Caco-2 (cell line): ENCODE measurements at regions of chr5 and their contacts with region 1.

Region 1: DNA sequence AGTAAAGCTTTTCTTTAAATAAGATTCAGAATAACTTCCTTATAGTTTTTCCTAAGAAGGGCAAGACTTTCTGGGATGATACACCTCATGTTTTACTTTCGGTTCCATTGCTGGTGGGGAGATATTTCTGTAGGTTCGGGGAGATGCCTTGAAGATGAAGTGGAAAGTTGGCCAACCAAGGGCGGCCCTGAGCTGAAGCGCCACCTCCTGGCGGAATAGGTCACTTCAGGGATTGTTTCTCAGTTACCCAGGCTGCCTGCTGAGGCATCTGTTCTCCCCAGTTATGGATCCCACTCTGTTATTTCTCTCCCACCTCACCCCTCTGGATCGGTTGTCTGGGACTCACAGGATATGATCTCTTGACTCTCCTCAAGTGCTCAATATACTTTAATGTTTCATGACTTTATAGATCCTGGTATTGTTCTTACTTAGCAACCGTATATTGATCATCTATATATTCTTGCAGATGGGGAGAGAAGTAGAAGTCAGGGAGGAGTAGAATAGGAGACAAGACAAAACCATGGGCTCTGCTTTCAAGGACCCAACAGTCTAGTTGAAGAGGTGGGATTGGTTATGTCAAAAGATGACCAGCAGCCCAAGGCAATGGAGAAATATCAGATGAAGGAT is 23.4 kb downstream of the MEGF10 start:
- DNase-seq: peak; percentile 50 to 73
- H3K4me3 ChIP-seq: no peak overlapping the region
- H3K4me3 Mint-ChIP-seq: no peak overlapping the region
- H3K27ac Mint-ChIP-seq: no peak overlapping the region
- H3K4me1 ChIP-seq: no peaks in the 10 kb centered on the region
- H3K4me1 Mint-ChIP-seq: no peaks in the 10 kb centered on the region
- H3K27me3 ChIP-seq: no peaks in the 10 kb centered on the region
- H3K27me3 Mint-ChIP-seq: peaks cover 4% of the 10 kb centered on the region
- CTCF ChIP-seq: peak; percentile 75 to 80

Region 2: DNA sequence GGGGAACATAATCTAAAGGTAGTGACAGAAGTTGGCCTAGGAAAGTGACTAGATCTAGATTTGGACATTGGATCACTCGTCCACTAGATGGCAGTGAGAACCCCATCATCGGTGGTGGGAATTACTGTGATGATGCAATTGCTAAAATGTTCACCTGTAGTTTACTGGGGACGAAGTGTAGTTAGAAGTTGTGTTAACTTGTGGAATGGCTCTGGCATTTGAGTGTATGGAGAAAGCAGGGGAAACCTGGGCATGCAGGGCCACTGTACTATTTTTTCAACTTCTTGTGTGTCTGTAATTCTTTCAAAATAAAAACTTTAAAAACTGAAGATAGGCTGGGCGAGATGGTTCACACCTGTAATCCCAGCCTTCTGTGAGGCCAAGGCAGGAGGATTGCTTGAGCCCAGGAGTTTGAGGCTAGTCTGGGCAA is 637.8 kb before region 1 on chr5:
- CTCF ChIA-PET with region 1: no interaction called
- POLR2A ChIA-PET with region 1: no interaction called
- intact Hi-C with region 1: loop called (anchors 5 kb)
- DNase-seq: peak; percentile 60 to 71
- H3K4me3 ChIP-seq: no peak overlapping the region
- H3K4me3 Mint-ChIP-seq: peak overlapping the region; percentile 18
- H3K27ac Mint-ChIP-seq: peak overlapping the region; percentile 40
- H3K4me1 ChIP-seq: no peaks in the 10 kb centered on the region
- H3K4me1 Mint-ChIP-seq: peaks cover 7% of the 10 kb centered on the region
- H3K27me3 ChIP-seq: no peaks in the 10 kb centered on the region
- H3K27me3 Mint-ChIP-seq: no peaks in the 10 kb centered on the region
- CTCF ChIP-seq: peak; percentile 78 to 85

Region 3: DNA sequence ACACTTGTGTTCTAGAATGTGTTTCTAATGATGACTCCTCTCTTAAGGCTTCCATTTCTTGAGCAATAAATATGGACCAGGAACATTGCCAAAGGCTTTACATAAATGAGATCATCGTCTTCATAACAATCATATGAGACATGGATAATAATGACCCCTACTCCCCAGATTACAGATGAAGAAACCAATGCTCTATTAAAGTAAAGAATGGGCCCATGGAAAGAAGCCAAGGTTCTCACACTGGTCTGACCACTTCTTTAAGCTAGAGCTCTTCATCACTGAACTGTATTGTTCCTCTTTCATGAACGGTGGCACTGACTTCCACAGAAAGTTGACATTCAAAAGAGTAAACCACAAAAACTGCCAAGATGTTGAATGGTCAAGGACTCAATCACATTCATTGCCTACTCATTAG is 348.9 kb before region 1 on chr5:
- CTCF ChIA-PET with region 1: no interaction called
- POLR2A ChIA-PET with region 1: no interaction called
- intact Hi-C with region 1: loop called (anchors 10 kb)
- DNase-seq: no peak
- H3K4me3 ChIP-seq: no peak overlapping the region
- H3K4me3 Mint-ChIP-seq: no peak overlapping the region
- H3K27ac Mint-ChIP-seq: no peak overlapping the region
- H3K4me1 ChIP-seq: no peaks in the 10 kb centered on the region
- H3K4me1 Mint-ChIP-seq: no peaks in the 10 kb centered on the region
- H3K27me3 ChIP-seq: no peaks in the 10 kb centered on the region
- H3K27me3 Mint-ChIP-seq: peaks cover 4% of the 10 kb centered on the region
- CTCF ChIP-seq: no peak

Region 4: DNA sequence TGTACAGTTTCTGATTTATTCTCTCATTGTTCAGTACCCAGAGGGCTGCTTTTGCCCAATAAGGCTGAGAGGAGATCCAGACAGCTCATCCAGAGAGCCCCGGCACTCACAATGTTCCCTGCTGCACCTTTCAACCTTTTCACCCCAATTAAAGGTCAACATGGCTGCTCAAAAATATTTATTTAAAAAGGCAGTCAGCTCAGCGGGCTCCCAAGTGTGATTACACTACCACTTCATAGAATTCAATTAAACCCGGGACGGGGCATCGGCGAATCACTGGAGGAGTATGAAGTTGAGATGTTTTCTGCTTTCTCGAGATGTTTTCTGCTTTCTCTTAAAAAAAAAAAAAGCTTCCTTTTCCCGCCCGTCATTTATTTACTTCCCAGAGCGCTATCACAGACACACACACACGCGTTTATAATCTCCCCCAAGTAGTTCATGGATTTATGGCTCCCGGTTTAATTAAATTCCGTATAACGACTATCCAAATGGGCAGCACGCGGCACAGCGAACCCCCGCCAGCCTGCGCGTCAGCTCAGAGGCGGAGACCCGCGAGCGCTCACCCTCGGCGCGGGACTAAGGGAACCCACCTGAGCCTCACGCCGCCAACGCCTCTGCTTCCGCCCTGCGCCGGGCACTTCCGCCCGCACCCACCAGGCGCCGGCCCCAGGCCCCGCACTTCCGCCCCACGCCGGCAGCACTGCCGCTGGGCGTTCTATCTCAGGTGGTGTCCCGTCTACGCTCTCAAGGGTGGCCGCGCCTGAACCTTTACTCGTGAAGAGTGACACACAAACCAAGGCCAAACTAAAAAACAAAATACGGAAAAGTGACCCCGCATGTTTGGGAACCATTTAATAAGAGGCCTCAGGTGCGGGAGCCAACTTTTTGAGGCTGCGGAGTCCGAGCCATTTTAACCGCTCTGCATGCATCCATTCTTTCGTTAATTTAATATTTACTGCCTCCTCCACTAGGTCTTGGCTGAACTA is 240.8 kb before region 1 on chr5 and contains the start of gene C5orf63:
- CTCF ChIA-PET with region 1: no interaction called
- POLR2A ChIA-PET with region 1: no interaction called
- intact Hi-C with region 1: loop called (anchors 10 kb)
- DNase-seq: peak; percentile 78 to 79
- H3K4me3 ChIP-seq: peak within 1 kb of the TSS; percentile 50
- H3K4me3 Mint-ChIP-seq: peak within 1 kb of the TSS; percentile 77
- H3K27ac Mint-ChIP-seq: peak within 1 kb of the TSS; percentile 73
- H3K4me1 ChIP-seq: peaks cover 15% of the 10 kb centered on the region
- H3K4me1 Mint-ChIP-seq: peaks cover 9% of the 10 kb centered on the region
- H3K27me3 ChIP-seq: no peaks in the 10 kb centered on the region
- H3K27me3 Mint-ChIP-seq: no peaks in the 10 kb centered on the region
- CTCF ChIP-seq: peak; percentile 25 to 39
- total RNA-seq, gene C5orf63: 7.6 and 10.5 TPM in 2 replicates

Region 5: DNA sequence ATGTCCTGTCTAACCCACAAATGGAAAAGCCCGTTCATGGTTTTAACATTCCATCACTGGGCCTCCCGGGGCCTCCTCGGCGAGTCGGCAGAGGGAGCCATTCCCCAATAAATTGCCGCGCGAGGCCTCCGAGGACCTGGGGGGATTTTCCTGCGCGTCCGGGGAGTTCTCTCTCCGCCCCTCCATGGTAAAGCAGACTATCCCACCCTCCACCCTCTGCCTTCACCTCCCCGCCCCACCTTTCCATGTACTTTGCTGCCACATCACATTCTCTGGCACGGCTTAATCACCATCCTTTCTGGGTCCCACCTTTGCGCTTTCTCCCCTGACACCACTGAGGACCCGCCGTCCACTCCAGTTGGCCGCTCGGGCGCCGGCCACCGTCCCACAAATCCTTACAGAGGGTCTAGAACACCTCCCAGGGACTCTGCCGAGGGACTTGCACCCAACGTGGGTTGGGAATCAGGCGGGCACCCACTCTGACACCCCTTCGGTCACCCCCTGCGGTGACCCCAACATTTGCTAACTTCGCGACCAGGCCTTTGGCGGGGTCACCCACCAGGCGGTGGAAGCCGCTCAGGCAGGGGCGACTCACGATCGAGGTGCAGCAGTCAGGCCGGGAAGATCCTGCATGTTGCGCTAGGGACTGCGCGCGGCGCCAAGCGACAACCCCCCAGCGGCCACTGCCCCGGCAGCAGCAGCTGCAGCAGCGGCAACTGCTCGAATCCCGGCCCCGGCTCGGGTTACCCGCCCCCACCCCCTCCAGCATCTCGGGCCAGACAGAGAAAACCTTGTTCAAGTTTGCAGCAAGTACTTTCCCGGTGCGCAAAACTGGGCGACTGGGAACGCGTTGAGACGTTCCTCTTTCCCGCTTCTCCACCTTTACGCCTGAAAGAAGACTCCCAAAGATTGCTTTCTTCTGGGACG is 23.7 kb before region 1 on chr5 and contains the start of gene MEGF10:
- CTCF ChIA-PET with region 1: no interaction called
- POLR2A ChIA-PET with region 1: no interaction called
- intact Hi-C with region 1: loop called (anchors 1 kb)
- DNase-seq: peak in 1 of 2 experiments; percentile 20
- H3K4me3 ChIP-seq: no peak within 1 kb of the TSS
- H3K4me3 Mint-ChIP-seq: peak within 1 kb of the TSS; percentile 18
- H3K27ac Mint-ChIP-seq: no peak within 1 kb of the TSS
- H3K4me1 ChIP-seq: no peaks in the 10 kb centered on the region
- H3K4me1 Mint-ChIP-seq: no peaks in the 10 kb centered on the region
- H3K27me3 ChIP-seq: peaks cover 2% of the 10 kb centered on the region
- H3K27me3 Mint-ChIP-seq: peaks cover 14% of the 10 kb centered on the region
- CTCF ChIP-seq: peak; percentile 20 to 37
- total RNA-seq, gene MEGF10: not detected in 2 replicates

Region 6: GRCh38 chr5:127351418-127351817 is 37.5 kb after region 1 on chr5:
- CTCF ChIA-PET with region 1: no interaction called
- POLR2A ChIA-PET with region 1: no interaction called
- intact Hi-C with region 1: no loop called
- DNase-seq: no peak
- H3K4me3 ChIP-seq: no peak overlapping the region
- H3K4me3 Mint-ChIP-seq: no peak overlapping the region
- H3K27ac Mint-ChIP-seq: no peak overlapping the region
- H3K4me1 ChIP-seq: no peaks in the 10 kb centered on the region
- H3K4me1 Mint-ChIP-seq: no peaks in the 10 kb centered on the region
- H3K27me3 ChIP-seq: no peaks in the 10 kb centered on the region
- H3K27me3 Mint-ChIP-seq: peaks cover 3% of the 10 kb centered on the region
- CTCF ChIP-seq: no peak